ENCODE measurements at regions of chr17 and their contacts with region 1.

Region 1: GRCh38 chr17:14300575-14301278 is at the start of gene HS3ST3B1:
- DNase-seq: peak; percentile 98 to 100 (median 99)
- ATAC-seq: peak; percentile 87
- H3K4me3 ChIP-seq: peak within 1 kb of the TSS; percentile 80 to 92
- H3K4me3 Mint-ChIP-seq: peak within 1 kb of the TSS; percentile 97
- H3K27ac ChIP-seq: peak within 1 kb of the TSS; percentile 72 to 88
- H3K27ac Mint-ChIP-seq: peak within 1 kb of the TSS; percentile 96
- H3K4me1 ChIP-seq: peaks cover 51% of the 10 kb centered on the region
- H3K4me1 Mint-ChIP-seq: peaks cover 57% of the 10 kb centered on the region
- H3K27me3 ChIP-seq: peaks cover 13 to 23% of the 10 kb centered on the region in 2 experiments
- H3K27me3 Mint-ChIP-seq: peaks cover 32% of the 10 kb centered on the region
- CTCF ChIP-seq: peak; percentile 16
- total RNA-seq, gene HS3ST3B1: 8.1 to 8.4 TPM

Region 2: DNA sequence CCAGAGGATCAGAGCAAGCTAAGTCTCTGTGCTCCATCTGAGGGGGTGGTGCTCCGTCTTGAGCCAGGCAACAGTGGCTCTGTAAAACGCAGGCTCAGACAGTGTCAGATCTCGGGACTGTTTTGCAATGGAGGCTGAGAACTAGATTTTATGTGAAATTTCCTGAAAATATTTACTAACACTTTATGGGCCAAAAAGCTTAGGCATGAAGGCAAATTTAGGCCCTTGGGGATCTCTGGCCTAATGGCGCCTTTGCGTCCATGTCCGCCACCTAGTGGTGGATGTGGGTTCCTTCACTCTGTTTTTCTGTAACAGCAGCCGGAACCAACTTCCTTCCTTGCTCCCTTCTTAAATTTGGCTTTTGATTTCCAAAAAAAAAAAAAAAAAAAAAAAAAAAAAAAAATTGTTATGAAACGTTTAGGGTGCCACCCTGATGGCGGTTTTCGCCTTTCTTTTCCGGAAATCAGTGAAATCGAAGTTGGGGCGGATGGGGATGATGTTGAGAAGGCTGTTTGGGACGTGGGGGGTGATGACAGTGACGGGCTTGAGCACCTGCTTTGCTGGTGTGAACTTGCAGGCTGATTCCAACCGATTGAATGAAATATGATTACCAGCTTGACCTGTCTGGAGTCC is 1268.9 kb before region 1 on chr17:
- CTCF ChIA-PET with region 1: no interaction called
- POLR2A ChIA-PET with region 1: no interaction called
- intact Hi-C with region 1: loop called (anchors 2 to 5 kb)
- DNase-seq: peak; percentile 10 to 72 (median 41)
- ATAC-seq: peak; percentile 81
- H3K4me3 ChIP-seq: no peak overlapping the region
- H3K4me3 Mint-ChIP-seq: no peak overlapping the region
- H3K27ac ChIP-seq: no peak overlapping the region
- H3K27ac Mint-ChIP-seq: peak overlapping the region; percentile 75
- H3K4me1 ChIP-seq: peaks cover 3% of the 10 kb centered on the region
- H3K4me1 Mint-ChIP-seq: peaks cover 16% of the 10 kb centered on the region
- H3K27me3 ChIP-seq: no peaks in the 10 kb centered on the region
- H3K27me3 Mint-ChIP-seq: peaks cover 8% of the 10 kb centered on the region
- CTCF ChIP-seq: peak; percentile 72

Region 3: GRCh38 chr17:14069251-14070021 is 231.3 kb before region 1 on chr17 and contains the start of gene COX10:
- CTCF ChIA-PET with region 1: interaction called, 11 read pairs
- POLR2A ChIA-PET with region 1: interaction called, 4 read pairs
- intact Hi-C with region 1: loop called (anchors 1 kb)
- DNase-seq: peak; percentile 56 to 90 (median 83)
- ATAC-seq: peak; percentile 97
- H3K4me3 ChIP-seq: peak within 1 kb of the TSS; percentile 95 to 100
- H3K4me3 Mint-ChIP-seq: peak within 1 kb of the TSS; percentile 95
- H3K27ac ChIP-seq: peak within 1 kb of the TSS; percentile 76 to 86
- H3K27ac Mint-ChIP-seq: peak within 1 kb of the TSS; percentile 96
- H3K4me1 ChIP-seq: peaks cover 26% of the 10 kb centered on the region
- H3K4me1 Mint-ChIP-seq: peaks cover 47% of the 10 kb centered on the region
- H3K27me3 ChIP-seq: no peaks in the 10 kb centered on the region
- H3K27me3 Mint-ChIP-seq: no peaks in the 10 kb centered on the region
- CTCF ChIP-seq: no peak
- total RNA-seq, gene COX10: 13.4 to 14.4 TPM

Region 4: GRCh38 chr17:14211801-14212200 is 88.9 kb before region 1 on chr17:
- CTCF ChIA-PET with region 1: interaction called, 10 read pairs
- POLR2A ChIA-PET with region 1: interaction called, 5 read pairs
- intact Hi-C with region 1: no loop called
- DNase-seq: peak in 8 of 9 experiments; percentile 40 to 73 (median 60)
- ATAC-seq: peak; percentile 69
- H3K4me3 ChIP-seq: no peak overlapping the region
- H3K4me3 Mint-ChIP-seq: no peak overlapping the region
- H3K27ac ChIP-seq: no peak overlapping the region
- H3K27ac Mint-ChIP-seq: no peak overlapping the region
- H3K4me1 ChIP-seq: peaks cover 9% of the 10 kb centered on the region
- H3K4me1 Mint-ChIP-seq: peaks cover 27% of the 10 kb centered on the region
- H3K27me3 ChIP-seq: no peaks in the 10 kb centered on the region
- H3K27me3 Mint-ChIP-seq: no peaks in the 10 kb centered on the region
- CTCF ChIP-seq: peak; percentile 48

Region 5: GRCh38 chr17:14553855-14554254 is 253.1 kb after region 1 on chr17:
- CTCF ChIA-PET with region 1: interaction called, 7 read pairs
- POLR2A ChIA-PET with region 1: no interaction called
- intact Hi-C with region 1: loop called in 1 of 2 experiments (anchors 5 kb)
- DNase-seq: peak in 2 of 9 experiments; percentile 20 to 27
- ATAC-seq: no peak
- H3K4me3 ChIP-seq: no peak overlapping the region
- H3K4me3 Mint-ChIP-seq: no peak overlapping the region
- H3K27ac ChIP-seq: no peak overlapping the region
- H3K27ac Mint-ChIP-seq: no peak overlapping the region
- H3K4me1 ChIP-seq: no peaks in the 10 kb centered on the region
- H3K4me1 Mint-ChIP-seq: peaks cover 5% of the 10 kb centered on the region
- H3K27me3 ChIP-seq: no peaks in the 10 kb centered on the region
- H3K27me3 Mint-ChIP-seq: no peaks in the 10 kb centered on the region
- CTCF ChIP-seq: no peak

Measured in CD8-positive, alpha-beta T cell (primary cell).